ENCODE measurements at regions of chr9 and their contacts with region 1.

Region 1: GRCh38 chr9:130053504-130054324 is at the start of gene GPR107:
- DNase-seq: peak; percentile 89
- ATAC-seq: peak; percentile 98
- total RNA-seq, gene GPR107: 20.4 TPM

Region 2: DNA sequence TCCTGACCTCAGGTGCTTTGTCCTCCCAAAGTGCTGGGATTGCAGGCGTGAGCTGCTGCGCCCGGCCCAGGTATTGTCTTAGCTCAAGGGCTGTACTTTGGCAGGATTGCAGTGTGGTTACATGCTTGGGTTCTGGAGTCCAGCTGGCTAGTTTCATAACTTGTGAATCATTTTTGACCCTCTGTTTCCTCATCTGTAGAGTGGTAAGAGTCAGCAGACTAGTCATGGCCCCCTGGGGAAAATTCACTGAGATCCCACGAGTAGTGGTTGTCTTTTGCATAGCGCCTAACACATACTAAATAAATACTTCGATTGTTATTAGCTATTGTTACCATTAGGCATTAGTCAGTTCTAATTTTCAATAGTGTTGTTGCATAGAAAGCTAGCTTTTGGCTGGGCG is 928.2 kb before region 1 on chr9:
- intact Hi-C with region 1: loop called (anchors 10 kb)
- DNase-seq: no peak
- ATAC-seq: no peak